GM12878 (cell line): ENCODE measurements at regions of chr1 and their contacts with region 1.

Region 1: DNA sequence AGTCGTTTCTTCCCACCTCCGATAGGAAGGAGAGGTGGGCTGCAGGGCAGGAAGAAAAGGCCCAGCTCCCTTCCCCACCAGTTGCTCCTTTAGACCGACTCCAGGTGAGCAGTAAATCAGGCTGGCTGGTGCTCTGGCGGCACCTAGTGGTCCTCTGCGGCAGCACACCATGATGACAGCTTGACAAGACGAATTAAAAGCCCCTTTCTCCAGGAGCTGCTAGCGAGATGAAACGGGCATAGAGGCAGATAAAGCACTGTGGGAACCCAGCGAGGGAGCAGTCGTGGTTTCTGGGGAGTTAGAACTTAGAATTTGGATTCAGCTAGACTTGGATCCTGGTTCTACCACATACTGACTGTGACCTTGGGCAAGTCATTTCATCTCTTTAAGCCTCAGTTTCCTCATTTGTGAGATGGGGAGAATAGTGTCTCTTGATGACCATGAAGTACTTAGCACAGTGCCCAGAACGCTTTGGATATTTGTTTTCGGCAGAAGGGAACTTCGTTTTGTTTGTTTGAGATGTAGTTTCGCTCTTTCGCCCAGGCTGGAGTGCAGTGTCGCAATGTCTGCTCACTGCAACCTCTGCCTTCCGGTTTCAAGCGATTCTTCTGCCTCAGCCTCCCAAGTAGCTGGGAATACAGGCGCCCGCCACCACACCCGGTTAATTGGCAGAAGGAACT is 21.8 kb upstream of the COL9A2 start:
- DNase-seq: peak; percentile 76
- ATAC-seq: peak; percentile 99
- H3K4me3 ChIP-seq: no peak overlapping the region
- H3K27ac ChIP-seq: no peak overlapping the region
- H3K4me1 ChIP-seq: peaks cover 5% of the 10 kb centered on the region; the same call in 1 of the 2 replicates
- H3K27me3 ChIP-seq: no peaks in the 10 kb centered on the region
- CTCF ChIP-seq: peak; percentile 99; a peak in 5 of 6 replicates
- EP300 ChIP-seq: no peak
- POLR2A ChIP-seq: no peak
- RAD21 ChIP-seq: peak; percentile 98

Region 2: DNA sequence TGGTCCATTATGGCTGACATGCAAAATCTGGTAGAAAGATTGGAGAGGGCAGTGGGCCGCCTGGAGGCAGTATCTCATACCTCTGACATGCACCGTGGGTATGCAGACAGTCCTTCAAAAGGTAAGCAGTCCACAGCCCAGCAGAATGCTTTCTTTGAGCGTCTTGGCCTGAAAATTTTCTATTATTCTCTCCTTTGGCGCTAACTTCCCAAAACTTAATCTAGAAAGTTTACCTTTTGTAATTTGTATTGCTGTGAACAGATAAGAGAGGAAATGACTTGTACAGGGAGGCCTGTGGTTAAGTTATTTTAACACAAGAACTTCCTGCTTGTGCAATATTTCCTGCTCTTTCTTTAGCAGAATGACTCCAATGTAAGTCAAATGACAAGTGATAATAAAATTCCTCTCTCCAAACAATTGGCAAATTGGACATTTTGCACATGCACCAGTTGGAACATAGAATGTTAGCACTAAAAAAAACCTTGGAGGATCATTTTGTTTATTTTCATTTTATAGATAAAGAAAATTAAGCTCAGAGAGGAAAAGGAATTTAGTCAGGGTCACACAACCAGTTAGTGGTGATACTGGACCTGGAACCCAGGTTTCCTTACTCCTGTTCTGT is 279.4 kb before region 1 on chr1:
- CTCF ChIA-PET with region 1: interaction called, 10 read pairs
- POLR2A ChIA-PET with region 1: no interaction called
- RAD21 ChIA-PET with region 1: no interaction called
- SMC1A ChIA-PET with region 1: interaction called, 4 read pairs
- in situ Hi-C with region 1: no loop called
- intact Hi-C with region 1: no loop called
- DNase-seq: no peak
- ATAC-seq: peak; percentile 82
- H3K4me3 ChIP-seq: peak overlapping the region; percentile 25; the same call in 1 of the 2 replicates
- H3K27ac ChIP-seq: peak overlapping the region; percentile 84
- H3K4me1 ChIP-seq: peaks cover 47% of the 10 kb centered on the region
- H3K27me3 ChIP-seq: no peaks in the 10 kb centered on the region
- CTCF ChIP-seq: peak; percentile 10 to 15 (median 11); a peak in 2 of 6 replicates
- EP300 ChIP-seq: no peak
- POLR2A ChIP-seq: no peak
- RAD21 ChIP-seq: no peak

Region 3: DNA sequence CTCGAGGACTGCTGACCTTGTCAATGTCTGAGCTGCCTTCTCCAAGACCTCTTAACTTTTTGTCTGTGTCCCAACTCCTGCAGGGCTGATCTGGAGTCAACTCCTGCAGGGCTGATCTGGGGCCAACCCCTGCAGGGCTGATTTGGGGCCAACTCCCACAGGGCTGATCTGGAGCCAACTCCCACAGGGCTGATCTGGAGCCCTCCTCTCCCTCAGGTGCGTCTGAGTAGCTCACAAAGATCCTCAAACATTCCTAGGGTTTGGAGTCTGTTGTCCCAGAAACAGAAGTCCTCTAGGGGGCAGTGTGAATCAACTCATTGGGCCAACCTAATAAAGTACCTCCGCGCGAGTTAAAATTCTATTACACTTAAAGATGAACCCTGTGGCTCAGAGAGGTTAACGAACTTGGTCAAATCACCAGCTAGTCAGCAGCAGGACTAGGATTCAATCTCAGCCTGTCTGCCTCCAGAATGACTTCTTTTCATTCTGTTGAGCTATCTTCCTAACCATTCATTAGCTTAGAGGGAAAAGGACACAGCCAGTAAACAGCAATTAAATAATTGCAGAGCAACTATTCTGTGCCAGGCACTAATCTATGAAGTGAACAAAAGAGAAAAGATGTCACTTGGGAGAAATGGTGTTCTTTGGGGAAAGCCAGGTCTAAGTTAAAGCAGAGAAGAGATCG is 194.9 kb before region 1 on chr1:
- CTCF ChIA-PET with region 1: interaction called, 332 read pairs
- POLR2A ChIA-PET with region 1: interaction called, 10 read pairs
- RAD21 ChIA-PET with region 1: interaction called, 151 read pairs
- SMC1A ChIA-PET with region 1: interaction called, 182 read pairs
- in situ Hi-C with region 1: no loop called
- intact Hi-C with region 1: loop called (anchors 1 kb)
- DNase-seq: peak; percentile 39
- ATAC-seq: peak; percentile 96
- H3K4me3 ChIP-seq: no peak overlapping the region
- H3K27ac ChIP-seq: no peak overlapping the region
- H3K4me1 ChIP-seq: no peaks in the 10 kb centered on the region
- H3K27me3 ChIP-seq: no peaks in the 10 kb centered on the region; a peak in 1 of 4 replicates
- CTCF ChIP-seq: peak; percentile 69 to 84 (median 72)
- EP300 ChIP-seq: no peak
- POLR2A ChIP-seq: no peak
- RAD21 ChIP-seq: peak; percentile 95

Region 4: GRCh38 chr1:40257688-40258444 is 81.0 kb before region 1 on chr1 and contains the start of gene ZMPSTE24:
- CTCF ChIA-PET with region 1: interaction called, 6 read pairs
- POLR2A ChIA-PET with region 1: no interaction called
- RAD21 ChIA-PET with region 1: interaction called, 10 read pairs
- SMC1A ChIA-PET with region 1: interaction called, 6 read pairs
- in situ Hi-C with region 1: no loop called
- intact Hi-C with region 1: no loop called
- DNase-seq: peak; percentile 87
- ATAC-seq: peak; percentile 98
- H3K4me3 ChIP-seq: peak within 1 kb of the TSS; percentile 84
- H3K27ac ChIP-seq: peak within 1 kb of the TSS; percentile 99
- H3K4me1 ChIP-seq: peaks cover 8% of the 10 kb centered on the region; the same call in 1 of the 2 replicates
- H3K27me3 ChIP-seq: no peaks in the 10 kb centered on the region
- CTCF ChIP-seq: no peak
- EP300 ChIP-seq: 0 out of 4 replicates have a peak, but pooled peaks of 1 of the 2 experiments have one; percentile 51
- POLR2A ChIP-seq: peak; percentile 90
- RAD21 ChIP-seq: peak; percentile 22; the same call in 1 of the 2 replicates
- polyA plus RNA-seq, gene ZMPSTE24: 30.1 to 56.0 TPM

Region 5: DNA sequence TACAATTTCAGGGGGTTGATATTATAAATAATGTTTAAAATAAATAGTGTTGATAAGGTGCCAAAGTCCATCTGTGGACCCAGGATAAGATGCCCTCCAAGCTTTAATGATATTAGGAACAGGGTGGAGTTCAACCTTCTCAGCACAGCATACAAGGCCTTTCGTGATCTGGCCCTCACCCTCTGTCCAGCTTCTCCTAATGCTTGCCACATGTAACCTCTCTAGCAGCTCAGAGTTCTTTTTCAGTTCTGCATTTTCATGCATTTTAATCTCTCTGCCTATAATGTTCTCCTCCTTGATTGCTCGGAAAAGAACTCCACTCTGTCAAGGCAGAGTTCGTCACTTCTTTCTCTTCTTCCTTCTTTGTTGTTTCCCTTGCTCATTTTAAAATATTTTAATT is 13.2 kb after region 1 on chr1:
- CTCF ChIA-PET with region 1: interaction called, 16 read pairs
- POLR2A ChIA-PET with region 1: interaction called, 3 read pairs
- RAD21 ChIA-PET with region 1: interaction called, 7 read pairs
- SMC1A ChIA-PET with region 1: interaction called, 22 read pairs
- in situ Hi-C with region 1: no loop called
- intact Hi-C with region 1: no loop called
- DNase-seq: no peak
- ATAC-seq: peak; percentile 94
- H3K4me3 ChIP-seq: no peak overlapping the region
- H3K27ac ChIP-seq: no peak overlapping the region; the same call in 1 of the 2 replicates
- H3K4me1 ChIP-seq: peaks cover 13% of the 10 kb centered on the region
- H3K27me3 ChIP-seq: no peaks in the 10 kb centered on the region
- CTCF ChIP-seq: no peak
- EP300 ChIP-seq: no peak
- POLR2A ChIP-seq: no peak
- RAD21 ChIP-seq: no peak

Region 6: GRCh38 chr1:40373338-40374283 is 34.7 kb after region 1 on chr1 and contains the start of gene SMAP2:
- CTCF ChIA-PET with region 1: interaction called, 8 read pairs
- POLR2A ChIA-PET with region 1: interaction called, 7 read pairs
- RAD21 ChIA-PET with region 1: interaction called, 7 read pairs
- SMC1A ChIA-PET with region 1: interaction called, 10 read pairs
- in situ Hi-C with region 1: no loop called
- intact Hi-C with region 1: no loop called
- DNase-seq: peak; percentile 85
- ATAC-seq: peak; percentile 87
- H3K4me3 ChIP-seq: peak within 1 kb of the TSS; percentile 86
- H3K27ac ChIP-seq: peak within 1 kb of the TSS; percentile 94
- H3K4me1 ChIP-seq: peaks cover 9% of the 10 kb centered on the region
- H3K27me3 ChIP-seq: no peaks in the 10 kb centered on the region
- CTCF ChIP-seq: no peak
- EP300 ChIP-seq: no peak
- POLR2A ChIP-seq: peak; percentile 89
- RAD21 ChIP-seq: no peak
- polyA plus RNA-seq, gene SMAP2: 33.4 to 42.4 TPM

Region 7: DNA sequence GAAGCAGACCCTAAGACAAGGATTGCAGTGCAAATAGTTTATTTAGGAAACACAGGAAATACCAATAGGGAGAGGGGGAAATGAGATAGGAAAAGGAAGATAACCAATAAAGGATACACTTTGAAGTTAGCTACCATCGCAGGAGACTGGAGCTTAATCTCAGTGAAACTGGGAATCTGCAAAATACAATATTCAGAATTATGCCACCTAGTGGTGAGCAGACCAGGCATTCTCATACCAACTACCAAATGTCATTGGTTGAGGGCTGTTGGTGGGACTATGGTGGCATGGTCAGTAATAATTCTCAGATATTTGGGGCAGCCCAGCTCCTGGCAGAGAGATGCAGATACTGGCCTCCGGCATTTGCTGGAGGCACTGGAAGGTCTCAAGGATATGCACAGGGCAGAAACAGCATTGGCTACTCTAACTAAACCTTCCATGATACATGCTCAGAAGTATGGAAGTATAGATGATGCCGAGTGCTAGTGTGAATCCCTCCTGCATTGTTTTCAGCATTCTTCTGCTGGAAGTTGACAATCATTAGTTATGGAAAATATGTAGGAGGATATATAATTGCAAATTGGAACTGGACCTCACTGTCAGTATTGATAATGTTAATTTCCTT is 99.6 kb after region 1 on chr1:
- CTCF ChIA-PET with region 1: interaction called, 16 read pairs
- POLR2A ChIA-PET with region 1: no interaction called
- RAD21 ChIA-PET with region 1: no interaction called
- SMC1A ChIA-PET with region 1: interaction called, 4 read pairs
- in situ Hi-C with region 1: no loop called
- intact Hi-C with region 1: no loop called
- DNase-seq: no peak
- ATAC-seq: peak; percentile 84
- H3K4me3 ChIP-seq: no peak overlapping the region
- H3K27ac ChIP-seq: no peak overlapping the region
- H3K4me1 ChIP-seq: no peaks in the 10 kb centered on the region
- H3K27me3 ChIP-seq: no peaks in the 10 kb centered on the region
- CTCF ChIP-seq: peak; percentile 48 to 63 (median 53)
- EP300 ChIP-seq: no peak
- POLR2A ChIP-seq: no peak
- RAD21 ChIP-seq: peak; percentile 35; the same call in 1 of the 2 replicates